Naive thymus-derived CD4-positive, alpha-beta T cell (primary cell): ENCODE measurements at regions of chr2 and their contacts with region 1.

Region 1: DNA sequence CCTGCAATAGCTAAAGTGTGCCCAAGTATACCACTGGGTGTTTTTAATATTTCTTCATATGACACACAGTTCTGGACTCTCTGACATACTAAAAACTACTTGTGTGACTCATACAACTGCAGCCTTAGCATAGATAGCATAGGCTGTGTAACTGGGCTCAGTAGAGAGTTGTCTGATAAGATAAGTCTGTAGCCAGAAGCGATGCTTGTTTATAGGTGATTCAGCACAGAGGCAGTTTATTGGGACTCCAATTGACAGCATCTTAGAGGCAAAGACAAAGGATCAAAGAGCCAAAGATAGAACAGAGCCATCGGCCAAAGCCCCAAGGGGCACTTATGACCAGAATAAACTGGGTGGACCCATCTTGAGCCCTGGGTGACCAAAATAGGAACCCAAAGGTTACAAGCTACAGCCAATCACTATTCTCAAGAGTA is 42.3 kb downstream of the AAK1 start:
- DNase-seq: no peak
- ATAC-seq: peak; percentile 69
- H3K4me3 ChIP-seq: no peak overlapping the region
- H3K4me3 Mint-ChIP-seq: peak overlapping the region in 9 of 10 donors; percentile 16 to 73 (median 48)
- H3K27ac ChIP-seq: peak overlapping the region; percentile 47
- H3K27ac Mint-ChIP-seq: peak overlapping the region; percentile 25 to 93 (median 71)
- H3K4me1 ChIP-seq: peaks cover 42 to 66% of the 10 kb centered on the region in 2 donors
- H3K4me1 Mint-ChIP-seq: peaks cover 74 to 97% (median 91%) of the 10 kb centered on the region in 7 donors
- H3K27me3 ChIP-seq: no peaks in the 10 kb centered on the region
- H3K27me3 Mint-ChIP-seq: no peaks in the 10 kb centered on the region

Region 2: GRCh38 chr2:69138793-69139510 is 462.2 kb before region 1 on chr2:
- CTCF ChIA-PET with region 1: no interaction called
- POLR2A ChIA-PET with region 1: no interaction called
- intact Hi-C with region 1: no loop called
- DNase-seq: no peak
- ATAC-seq: no peak
- H3K4me3 ChIP-seq: no peak overlapping the region
- H3K4me3 Mint-ChIP-seq: no peak overlapping the region
- H3K27ac ChIP-seq: no peak overlapping the region
- H3K27ac Mint-ChIP-seq: no peak overlapping the region
- H3K4me1 ChIP-seq: no peaks in the 10 kb centered on the region
- H3K4me1 Mint-ChIP-seq: no peaks in the 10 kb centered on the region
- H3K27me3 ChIP-seq: no peaks in the 10 kb centered on the region
- H3K27me3 Mint-ChIP-seq: peaks cover 7 to 17% (median 11%) of the 10 kb centered on the region in 5 donors

Region 3: GRCh38 chr2:69565431-69565839 is 35.8 kb before region 1 on chr2:
- CTCF ChIA-PET with region 1: interaction called, 8 read pairs
- POLR2A ChIA-PET with region 1: no interaction called
- intact Hi-C with region 1: loop called in 1 of 2 experiments (anchors 5 kb)
- DNase-seq: peak; percentile 39 to 75 (median 51)
- ATAC-seq: peak; percentile 88
- H3K4me3 ChIP-seq: no peak overlapping the region
- H3K4me3 Mint-ChIP-seq: peak overlapping the region in 9 of 10 donors; percentile 63 to 84 (median 75)
- H3K27ac ChIP-seq: no peak overlapping the region
- H3K27ac Mint-ChIP-seq: peak overlapping the region; percentile 36 to 94 (median 77)
- H3K4me1 ChIP-seq: peaks cover 35 to 74% of the 10 kb centered on the region in 2 donors
- H3K4me1 Mint-ChIP-seq: peaks cover 63 to 99% (median 96%) of the 10 kb centered on the region in 7 donors
- H3K27me3 ChIP-seq: no peaks in the 10 kb centered on the region
- H3K27me3 Mint-ChIP-seq: no peaks in the 10 kb centered on the region

Region 4: GRCh38 chr2:69581774-69582581 is 19.2 kb before region 1 on chr2:
- CTCF ChIA-PET with region 1: interaction called, 3 read pairs
- POLR2A ChIA-PET with region 1: interaction called, 3 read pairs
- intact Hi-C with region 1: loop called in 1 of 2 experiments (anchors 2 kb)
- DNase-seq: peak in 4 of 9 donors; percentile 15 to 27 (median 24)
- ATAC-seq: peak; percentile 41
- H3K4me3 ChIP-seq: no peak overlapping the region
- H3K4me3 Mint-ChIP-seq: peak overlapping the region; percentile 26 to 82 (median 75)
- H3K27ac ChIP-seq: peak overlapping the region; percentile 34
- H3K27ac Mint-ChIP-seq: peak overlapping the region in 8 of 9 donors; percentile 30 to 94 (median 87)
- H3K4me1 ChIP-seq: peaks cover 42 to 87% of the 10 kb centered on the region in 2 donors
- H3K4me1 Mint-ChIP-seq: peaks cover 73 to 98% (median 96%) of the 10 kb centered on the region in 7 donors
- H3K27me3 ChIP-seq: no peaks in the 10 kb centered on the region
- H3K27me3 Mint-ChIP-seq: no peaks in the 10 kb centered on the region

Region 5: DNA sequence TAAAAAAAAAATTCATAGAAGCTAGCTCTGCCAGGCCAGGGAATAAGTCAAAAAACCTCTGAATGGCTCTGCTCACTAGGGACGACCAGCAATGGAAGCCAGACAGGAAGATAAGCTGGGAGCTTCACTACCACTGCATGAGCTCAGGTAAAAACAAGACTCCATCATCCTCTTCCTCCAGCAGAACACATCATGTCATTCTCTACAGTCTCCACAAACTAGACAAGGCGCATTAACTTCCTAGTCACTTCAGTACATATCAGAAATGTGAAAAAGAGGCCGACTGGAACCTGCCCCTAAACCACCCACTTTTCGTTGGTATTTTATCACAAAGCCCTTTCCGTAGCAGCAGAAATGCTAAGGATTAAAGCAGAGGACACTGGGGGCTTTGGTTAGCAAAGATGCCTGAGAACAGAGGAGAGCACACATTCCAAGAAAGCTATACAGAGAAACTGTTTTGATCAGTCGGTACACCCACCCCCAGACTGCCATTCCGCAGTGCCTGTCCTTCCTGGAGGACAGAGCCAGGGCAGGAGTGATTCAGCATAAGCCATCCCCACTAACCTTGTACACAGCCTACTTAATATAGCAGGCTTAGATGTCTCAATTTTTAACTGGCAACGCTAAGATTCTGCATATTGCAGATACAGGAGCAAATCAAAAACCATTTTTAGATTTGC is 11.1 kb before region 1 on chr2:
- CTCF ChIA-PET with region 1: interaction called, 9 read pairs
- POLR2A ChIA-PET with region 1: interaction called, 3 read pairs
- intact Hi-C with region 1: loop called in 1 of 2 experiments (anchors 1 kb)
- DNase-seq: peak in 2 of 9 donors; percentile 10 to 25
- ATAC-seq: peak; percentile 38
- H3K4me3 ChIP-seq: no peak overlapping the region
- H3K4me3 Mint-ChIP-seq: peak overlapping the region in 9 of 10 donors; percentile 55 to 77 (median 69)
- H3K27ac ChIP-seq: peak overlapping the region; percentile 25
- H3K27ac Mint-ChIP-seq: peak overlapping the region; percentile 54 to 92 (median 81)
- H3K4me1 ChIP-seq: peaks cover 14 to 58% of the 10 kb centered on the region in 2 donors
- H3K4me1 Mint-ChIP-seq: peaks cover 59 to 93% (median 87%) of the 10 kb centered on the region in 7 donors
- H3K27me3 ChIP-seq: no peaks in the 10 kb centered on the region
- H3K27me3 Mint-ChIP-seq: no peaks in the 10 kb centered on the region

Region 6: DNA sequence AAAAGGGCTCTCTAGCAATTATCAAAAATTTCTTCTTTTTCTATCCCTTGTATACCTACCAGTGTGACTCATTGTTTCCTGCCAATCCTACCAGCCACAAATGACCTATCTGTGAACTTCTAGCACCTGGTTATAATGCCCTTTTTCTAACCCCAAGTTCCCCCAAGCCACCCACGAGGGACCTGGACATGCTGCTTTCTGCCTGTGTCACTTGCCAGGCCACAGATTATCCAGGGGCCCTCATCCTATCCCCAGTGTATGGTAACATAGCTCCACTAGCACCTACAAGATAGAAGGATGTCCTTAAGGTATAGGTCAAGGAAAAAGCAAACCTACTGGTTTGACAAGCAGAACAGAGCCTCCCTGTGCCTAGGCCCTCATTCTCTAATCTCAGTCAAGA is 15.6 kb after region 1 on chr2:
- CTCF ChIA-PET with region 1: no interaction called
- POLR2A ChIA-PET with region 1: interaction called, 3 read pairs
- intact Hi-C with region 1: loop called (anchors 1 to 2 kb)
- DNase-seq: peak in 1 of 9 donors; percentile 45
- ATAC-seq: no peak
- H3K4me3 ChIP-seq: no peak overlapping the region
- H3K4me3 Mint-ChIP-seq: peak overlapping the region in 6 of 10 donors; percentile 8 to 52 (median 34)
- H3K27ac ChIP-seq: no peak overlapping the region
- H3K27ac Mint-ChIP-seq: peak overlapping the region in 6 of 9 donors; percentile 22 to 90 (median 70)
- H3K4me1 ChIP-seq: peaks cover 63 to 68% of the 10 kb centered on the region in 2 donors
- H3K4me1 Mint-ChIP-seq: peaks cover 0 to 45% (median 33%) of the 10 kb centered on the region in 7 donors
- H3K27me3 ChIP-seq: no peaks in the 10 kb centered on the region
- H3K27me3 Mint-ChIP-seq: no peaks in the 10 kb centered on the region

Region 7: GRCh38 chr2:69625078-69625795 is 24.0 kb after region 1 on chr2:
- CTCF ChIA-PET with region 1: no interaction called
- POLR2A ChIA-PET with region 1: interaction called, 5 read pairs
- intact Hi-C with region 1: loop called in 1 of 2 experiments (anchors 2 kb)
- DNase-seq: peak in 1 of 9 donors; percentile 30
- ATAC-seq: peak; percentile 50
- H3K4me3 ChIP-seq: peak overlapping the region; percentile 0
- H3K4me3 Mint-ChIP-seq: no peak overlapping the region
- H3K27ac ChIP-seq: peak overlapping the region; percentile 16
- H3K27ac Mint-ChIP-seq: no peak overlapping the region
- H3K4me1 ChIP-seq: peaks cover 57 to 74% of the 10 kb centered on the region in 2 donors
- H3K4me1 Mint-ChIP-seq: peaks cover 0 to 25% (median 0%) of the 10 kb centered on the region in 7 donors
- H3K27me3 ChIP-seq: no peaks in the 10 kb centered on the region
- H3K27me3 Mint-ChIP-seq: no peaks in the 10 kb centered on the region